Activated B cell treated with CpG ODN at 0.5 μM for 24 hours (primary cell): ENCODE measurements at regions of chr19 and their contacts with region 1.

Region 1: DNA sequence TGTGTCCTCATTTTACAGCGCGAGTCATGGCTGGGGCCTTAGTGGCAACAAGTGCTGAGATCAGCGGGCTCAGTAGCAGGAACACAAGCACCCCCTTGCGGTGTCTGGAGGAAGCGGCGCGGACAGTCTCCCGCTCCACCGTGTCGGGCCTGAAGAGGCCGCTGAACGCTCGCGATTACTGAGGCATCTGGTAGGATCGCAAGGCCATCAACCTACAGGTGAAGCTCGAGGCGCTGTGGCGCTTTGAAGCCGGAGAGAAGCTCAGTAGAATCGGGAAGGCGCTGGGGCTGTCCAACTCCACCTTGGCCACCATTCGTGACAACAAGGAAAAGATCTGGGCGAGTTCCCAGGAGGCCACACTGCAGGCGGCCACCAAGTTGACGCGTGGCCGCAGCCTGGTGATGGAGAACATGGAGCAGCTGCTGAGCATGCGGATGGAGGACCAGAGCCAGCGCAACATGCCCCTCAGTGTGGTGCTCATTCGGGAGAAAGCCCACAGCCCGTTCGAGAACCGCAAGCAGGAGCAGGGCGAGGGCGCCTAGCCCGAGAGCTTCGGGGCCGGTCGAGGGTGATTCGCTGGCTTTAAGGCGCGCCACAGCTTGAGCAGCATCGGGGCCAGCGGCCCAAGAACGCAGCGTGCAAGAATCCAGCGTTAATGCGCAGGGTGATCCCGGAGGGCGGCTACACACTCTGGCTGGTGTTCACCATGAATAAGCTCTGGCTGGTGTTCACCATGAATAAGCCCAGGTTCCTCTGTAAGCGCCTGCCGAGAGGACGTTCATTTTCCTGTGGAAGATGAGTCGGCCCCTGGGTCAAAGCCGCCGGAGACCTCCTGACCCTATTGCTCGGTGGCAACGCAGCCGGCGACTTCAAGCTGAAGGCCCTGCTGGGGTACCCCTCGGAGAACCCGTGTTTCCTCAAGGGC is 8.4 kb upstream of the MZF1 start:
- DNase-seq: peak; percentile 73
- ATAC-seq: peak; percentile 99
- H3K4me3 Mint-ChIP-seq: no peak overlapping the region
- H3K27ac Mint-ChIP-seq: peak overlapping the region; percentile 41
- H3K4me1 Mint-ChIP-seq: peaks cover 23% of the 10 kb centered on the region
- H3K27me3 Mint-ChIP-seq: no peaks in the 10 kb centered on the region
- CTCF ChIP-seq: no peak

Region 2: GRCh38 chr19:58513694-58514563 is 67.6 kb before region 1 on chr19:
- CTCF ChIA-PET with region 1: interaction called, 14 read pairs
- POLR2A ChIA-PET with region 1: interaction called, 6 read pairs
- intact Hi-C with region 1: loop called (anchors 1 kb)
- DNase-seq: peak; percentile 83
- ATAC-seq: peak; percentile 89
- H3K4me3 Mint-ChIP-seq: peak overlapping the region; percentile 73
- H3K27ac Mint-ChIP-seq: peak overlapping the region; percentile 24
- H3K4me1 Mint-ChIP-seq: peaks cover 32% of the 10 kb centered on the region
- H3K27me3 Mint-ChIP-seq: no peaks in the 10 kb centered on the region
- CTCF ChIP-seq: peak; percentile 24